ENCODE measurements at regions of chr12 and their contacts with region 1.

Region 1: DNA sequence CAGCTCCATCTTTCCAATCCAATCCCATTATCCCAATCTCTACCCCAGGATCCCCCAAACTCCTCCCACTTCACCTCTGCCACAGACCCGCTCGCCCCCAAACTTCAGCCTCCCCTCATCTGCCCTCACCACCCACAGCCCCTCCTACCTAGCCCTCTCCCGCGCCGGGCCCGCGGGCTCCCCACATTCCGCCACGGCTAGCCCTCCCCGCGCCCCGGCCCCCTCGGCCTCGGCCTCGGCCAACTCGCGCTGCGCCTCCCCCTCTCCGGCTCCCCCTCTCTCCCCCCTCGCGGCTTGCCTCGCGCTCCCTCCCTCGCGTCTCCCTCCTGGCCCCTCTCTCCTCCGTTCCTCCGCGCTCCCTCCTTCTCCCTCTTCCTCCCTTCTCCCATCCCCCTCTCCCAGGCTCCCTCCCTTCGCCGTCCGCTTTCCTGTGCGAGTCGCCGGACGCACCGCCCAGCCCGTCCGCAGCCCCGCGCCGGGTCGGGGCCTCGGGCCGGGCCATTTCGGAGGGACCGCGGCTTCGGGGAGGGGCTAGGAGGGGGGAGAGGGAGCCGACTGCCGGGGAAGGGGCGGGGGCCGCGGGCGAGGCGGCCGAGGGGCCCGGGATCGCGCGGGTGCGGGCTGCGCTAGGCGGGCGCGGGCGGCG is at the start of gene ATN1:
- DNase-seq: peak; percentile 55
- ATAC-seq: peak; percentile 32
- H3K4me3 Mint-ChIP-seq: peak within 1 kb of the TSS; percentile 78
- H3K27ac Mint-ChIP-seq: peak within 1 kb of the TSS; percentile 82
- H3K4me1 Mint-ChIP-seq: peaks cover 59% of the 10 kb centered on the region
- H3K27me3 Mint-ChIP-seq: no peaks in the 10 kb centered on the region
- CTCF ChIP-seq: no peak
- total RNA-seq, gene ATN1: 26.4 to 28.5 TPM

Region 2: GRCh38 chr12:6914246-6914946 is 13.1 kb before region 1 on chr12 and contains the start of gene ENO2:
- CTCF ChIA-PET with region 1: interaction called, 31 read pairs
- POLR2A ChIA-PET with region 1: interaction called, 11 read pairs
- intact Hi-C with region 1: no loop called
- DNase-seq: peak; percentile 88
- ATAC-seq: peak; percentile 91
- H3K4me3 Mint-ChIP-seq: peak within 1 kb of the TSS; percentile 95
- H3K27ac Mint-ChIP-seq: peak within 1 kb of the TSS; percentile 90
- H3K4me1 Mint-ChIP-seq: peaks cover 35% of the 10 kb centered on the region
- H3K27me3 Mint-ChIP-seq: no peaks in the 10 kb centered on the region
- CTCF ChIP-seq: no peak
- total RNA-seq, gene ENO2: 315 to 330 TPM

Region 3: DNA sequence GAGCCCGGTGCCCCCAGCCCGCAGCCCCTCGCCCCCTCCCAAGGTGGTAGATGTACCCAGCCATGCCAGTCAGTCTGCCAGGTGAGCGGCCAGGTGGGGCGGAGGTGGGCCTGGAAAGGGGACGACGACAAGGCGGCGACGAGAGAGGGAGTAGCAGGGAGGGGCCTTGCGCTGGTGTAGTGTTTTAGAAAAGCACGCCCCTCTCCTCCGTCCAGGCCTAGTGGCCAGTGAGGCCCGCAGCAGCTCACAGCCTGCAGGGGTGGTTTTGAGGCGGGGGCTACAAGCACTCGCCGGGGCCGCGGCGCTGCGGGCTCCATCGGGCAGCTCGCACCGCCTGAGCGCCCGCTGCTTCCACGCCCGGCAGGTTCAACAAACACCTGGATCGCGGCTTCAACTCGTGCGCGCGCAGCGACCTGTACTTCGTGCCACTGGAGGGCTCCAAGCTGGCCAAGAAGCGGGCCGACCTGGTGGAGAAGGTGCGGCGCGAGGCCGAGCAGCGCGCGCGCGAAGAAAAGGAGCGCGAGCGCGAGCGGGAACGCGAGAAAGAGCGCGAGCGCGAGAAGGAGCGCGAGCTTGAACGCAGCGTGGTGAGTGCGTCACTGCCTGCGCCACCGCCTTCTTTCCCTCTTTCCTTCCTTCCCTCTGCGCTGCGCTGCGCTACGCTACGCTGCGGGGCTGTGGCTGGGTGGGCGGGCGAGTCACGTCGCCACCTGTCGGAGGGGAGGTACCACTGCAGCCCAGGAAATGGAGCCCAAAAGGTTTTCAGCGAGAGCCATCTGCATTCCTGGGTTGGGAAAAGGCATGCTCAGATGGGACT is 10.2 kb after region 1 on chr12:
- CTCF ChIA-PET with region 1: interaction called, 108 read pairs
- POLR2A ChIA-PET with region 1: interaction called, 1,266 read pairs
- intact Hi-C with region 1: no loop called
- DNase-seq: peak; percentile 96
- ATAC-seq: peak; percentile 88
- H3K4me3 Mint-ChIP-seq: peak overlapping the region; percentile 83
- H3K27ac Mint-ChIP-seq: peak overlapping the region; percentile 98
- H3K4me1 Mint-ChIP-seq: peaks cover 54% of the 10 kb centered on the region
- H3K27me3 Mint-ChIP-seq: no peaks in the 10 kb centered on the region
- CTCF ChIP-seq: peak; percentile 89

Region 4: GRCh38 chr12:6953442-6954315 is 26.2 kb after region 1 on chr12:
- CTCF ChIA-PET with region 1: interaction called, 460 read pairs
- POLR2A ChIA-PET with region 1: interaction called, 1,266 read pairs
- intact Hi-C with region 1: no loop called
- DNase-seq: peak; percentile 88
- ATAC-seq: peak; percentile 18
- H3K4me3 Mint-ChIP-seq: peak overlapping the region; percentile 95
- H3K27ac Mint-ChIP-seq: peak overlapping the region; percentile 93
- H3K4me1 Mint-ChIP-seq: peaks cover 63% of the 10 kb centered on the region
- H3K27me3 Mint-ChIP-seq: no peaks in the 10 kb centered on the region
- CTCF ChIP-seq: no peak

Region 5: GRCh38 chr12:6965026-6965661 is 37.6 kb after region 1 on chr12:
- CTCF ChIA-PET with region 1: interaction called, 460 read pairs
- POLR2A ChIA-PET with region 1: interaction called, 1,266 read pairs
- intact Hi-C with region 1: no loop called
- DNase-seq: peak; percentile 92
- ATAC-seq: peak; percentile 35
- H3K4me3 Mint-ChIP-seq: peak overlapping the region; percentile 0
- H3K27ac Mint-ChIP-seq: peak overlapping the region; percentile 91
- H3K4me1 Mint-ChIP-seq: peaks cover 76% of the 10 kb centered on the region
- H3K27me3 Mint-ChIP-seq: no peaks in the 10 kb centered on the region
- CTCF ChIP-seq: peak; percentile 95